ENCODE measurements at regions of chr17 and their contacts with region 1.

Region 1: GRCh38 chr17:49567871-49568694 is 7.6 kb upstream of the NXPH3 start:
- DNase-seq: peak; percentile 81
- H3K4me3 ChIP-seq: peak overlapping the region; percentile 12 to 27
- H3K27ac ChIP-seq: peak overlapping the region; percentile 69 to 70
- H3K4me1 ChIP-seq: peaks cover 2% of the 10 kb centered on the region
- H3K27me3 ChIP-seq: no peaks in the 10 kb centered on the region
- CTCF ChIP-seq: peak; percentile 94 to 98 (median 97)
- POLR2A ChIP-seq: no peak

Region 2: GRCh38 chr17:49694847-49695683 is 127.0 kb after region 1 on chr17:
- intact Hi-C with region 1: loop called (anchors 1 kb)
- DNase-seq: peak; percentile 41
- H3K4me3 ChIP-seq: no peak overlapping the region
- H3K27ac ChIP-seq: peak overlapping the region in 1 of 2 donors; percentile 41
- H3K4me1 ChIP-seq: no peaks in the 10 kb centered on the region
- H3K27me3 ChIP-seq: no peaks in the 10 kb centered on the region
- CTCF ChIP-seq: peak; percentile 90 to 96 (median 94)
- POLR2A ChIP-seq: no peak

Region 3: DNA sequence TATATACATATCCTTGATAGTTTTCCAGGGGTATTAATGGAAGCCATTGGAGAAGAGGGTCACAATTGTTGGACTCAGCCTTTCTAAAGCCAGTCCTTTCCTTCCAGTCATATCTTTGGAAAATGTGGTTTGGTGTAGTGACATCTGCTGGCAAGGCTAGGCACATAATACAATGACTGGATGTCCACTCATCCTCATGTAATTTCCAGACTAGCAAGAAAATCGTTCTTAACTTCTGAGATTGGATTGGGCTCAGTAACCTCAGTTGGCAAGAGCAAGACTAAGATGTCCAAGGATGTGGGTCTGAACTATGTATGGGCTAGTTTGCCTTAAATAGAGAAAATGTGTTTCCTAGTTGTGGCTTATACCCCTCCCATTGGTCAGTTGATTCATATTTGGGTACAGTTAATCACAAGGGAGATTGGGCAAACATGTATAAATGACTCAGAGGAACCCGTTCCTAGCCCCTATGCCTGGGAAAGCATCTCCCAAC is 211.7 kb after region 1 on chr17:
- intact Hi-C with region 1: loop called (anchors 5 kb)
- DNase-seq: no peak
- H3K4me3 ChIP-seq: no peak overlapping the region
- H3K27ac ChIP-seq: no peak overlapping the region
- H3K4me1 ChIP-seq: no peaks in the 10 kb centered on the region
- H3K27me3 ChIP-seq: no peaks in the 10 kb centered on the region
- CTCF ChIP-seq: peak in 3 of 4 experiments; percentile 31 to 51 (median 49)
- POLR2A ChIP-seq: no peak

Region 4: GRCh38 chr17:49851387-49852291 is 283.6 kb after region 1 on chr17:
- intact Hi-C with region 1: loop called (anchors 5 kb)
- DNase-seq: peak; percentile 69
- H3K4me3 ChIP-seq: peak overlapping the region; percentile 56 to 62
- H3K27ac ChIP-seq: peak overlapping the region in 1 of 2 donors; percentile 38
- H3K4me1 ChIP-seq: no peaks in the 10 kb centered on the region
- H3K27me3 ChIP-seq: no peaks in the 10 kb centered on the region
- CTCF ChIP-seq: peak; percentile 29 to 77 (median 70)
- POLR2A ChIP-seq: no peak

Region 5: DNA sequence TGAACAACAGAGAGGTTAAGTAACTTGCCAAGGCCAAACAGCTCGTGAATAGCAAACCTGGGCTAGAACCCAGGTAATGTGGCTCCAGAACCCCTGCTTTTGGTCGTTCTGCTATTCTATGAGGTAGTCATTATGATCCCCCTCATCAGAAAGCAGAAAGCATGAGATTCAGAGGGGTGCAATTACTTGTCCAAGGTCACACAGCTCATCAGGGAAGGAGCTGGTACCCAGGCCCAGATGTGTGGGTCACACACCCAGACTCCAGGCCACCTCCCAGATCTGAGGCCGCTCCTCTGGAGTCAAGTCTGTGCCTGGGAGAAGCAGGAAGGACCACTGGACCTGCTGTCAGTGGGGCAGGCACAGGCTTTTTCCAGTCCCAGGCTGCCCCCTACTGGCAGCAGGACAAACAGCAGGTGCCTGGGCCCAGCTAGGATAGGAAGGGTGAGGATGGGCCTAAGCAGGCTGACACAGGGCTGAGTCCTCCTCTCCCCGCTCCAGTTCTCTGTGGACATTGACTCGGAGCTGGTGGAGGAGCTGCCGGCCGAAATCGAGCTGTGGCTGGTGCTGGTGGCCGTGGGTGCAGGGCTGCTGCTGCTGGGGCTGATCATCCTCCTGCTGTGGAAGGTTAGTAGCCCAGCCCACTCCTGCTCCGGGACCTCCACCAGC is 519.3 kb after region 1 on chr17:
- intact Hi-C with region 1: loop called (anchors 10 kb)
- DNase-seq: peak; percentile 53
- H3K4me3 ChIP-seq: no peak overlapping the region
- H3K27ac ChIP-seq: no peak overlapping the region
- H3K4me1 ChIP-seq: no peaks in the 10 kb centered on the region
- H3K27me3 ChIP-seq: no peaks in the 10 kb centered on the region
- CTCF ChIP-seq: peak; percentile 88 to 94 (median 94)
- POLR2A ChIP-seq: no peak